Right ventricle myocardium inferior (tissue), 1 donor: ENCODE measurements at regions of chr12 and their contacts with region 1.

Region 1: GRCh38 chr12:123365025-123365917 is 624 bp upstream of the SBNO1 start:
- DNase-seq: peak; percentile 99
- ATAC-seq: peak; percentile 95

Region 2: GRCh38 chr12:123388177-123388947 is 23.1 kb after region 1 on chr12:
- intact Hi-C with region 1: loop called (anchors 2 kb)
- DNase-seq: peak; percentile 91
- ATAC-seq: peak; percentile 68

Region 3: GRCh38 chr12:123478762-123479161 is 113.5 kb after region 1 on chr12:
- intact Hi-C with region 1: no loop called
- DNase-seq: no peak
- ATAC-seq: peak; percentile 82

Region 4: GRCh38 chr12:123580772-123581171 is 215.5 kb after region 1 on chr12:
- intact Hi-C with region 1: loop called (anchors 1 kb)
- DNase-seq: no peak
- ATAC-seq: no peak